Activated naive CD4-positive, alpha-beta T cell treated with anti-CD3 and anti-CD28 coated beads, Interleukin-2, amount 10 ng/mL, durations not matched to agents 7 days and 5 days (primary cell): ENCODE measurements at regions of chr16 and their contacts with region 1.

Region 1: GRCh38 chr16:25111403-25112166 is at the start of gene LCMT1:
- DNase-seq: peak; percentile 94
- H3K4me3 Mint-ChIP-seq: peak within 1 kb of the TSS; percentile 89
- H3K27ac Mint-ChIP-seq: peak within 1 kb of the TSS; percentile 96
- H3K4me1 Mint-ChIP-seq: peaks cover 52% of the 10 kb centered on the region
- H3K27me3 Mint-ChIP-seq: peaks cover 3% of the 10 kb centered on the region

Region 2: DNA sequence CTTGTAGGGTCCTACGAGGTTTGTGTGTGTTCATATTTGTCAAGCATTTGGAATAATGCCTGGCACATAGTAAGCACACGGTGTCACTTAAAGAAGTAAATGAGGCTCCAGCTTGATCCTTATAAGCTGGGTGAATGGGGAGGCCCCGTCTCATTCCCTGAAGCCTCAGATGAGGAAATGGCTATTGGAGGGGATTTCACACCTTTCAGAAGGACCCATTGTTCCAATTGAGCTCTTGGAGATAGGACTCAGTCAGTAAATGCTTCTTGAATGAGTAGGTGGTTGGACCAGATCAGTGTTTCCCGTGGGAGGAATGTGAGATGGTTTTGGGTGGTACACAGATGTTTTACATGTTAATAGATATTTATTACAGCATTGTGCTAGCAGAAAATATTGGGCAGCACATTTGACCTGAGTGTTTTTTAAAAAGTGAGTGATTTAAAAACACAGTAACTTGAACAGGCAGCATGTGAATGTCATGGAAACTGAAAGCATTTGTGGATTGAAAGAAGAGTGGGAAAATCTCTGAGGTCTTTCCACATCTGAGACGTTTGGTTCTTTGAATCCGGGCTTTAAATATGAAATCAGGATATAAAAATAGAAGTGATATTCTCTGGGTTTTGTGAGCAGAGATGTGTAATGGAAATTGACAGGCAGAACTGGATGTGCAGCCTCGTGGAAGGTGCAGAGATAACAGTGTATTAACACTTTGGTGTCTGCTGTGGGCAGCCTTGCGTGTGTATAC is 60.0 kb before region 1 on chr16:
- CTCF ChIA-PET with region 1: interaction called, 68 read pairs
- DNase-seq: no peak
- H3K4me3 Mint-ChIP-seq: peak overlapping the region; percentile 21
- H3K27ac Mint-ChIP-seq: peak overlapping the region; percentile 86
- H3K4me1 Mint-ChIP-seq: peaks cover 65% of the 10 kb centered on the region
- H3K27me3 Mint-ChIP-seq: no peaks in the 10 kb centered on the region

Region 3: GRCh38 chr16:25060920-25061319 is 50.7 kb before region 1 on chr16:
- CTCF ChIA-PET with region 1: interaction called, 68 read pairs
- DNase-seq: peak; percentile 51
- H3K4me3 Mint-ChIP-seq: peak overlapping the region; percentile 3
- H3K27ac Mint-ChIP-seq: peak overlapping the region; percentile 91
- H3K4me1 Mint-ChIP-seq: peaks cover 64% of the 10 kb centered on the region
- H3K27me3 Mint-ChIP-seq: no peaks in the 10 kb centered on the region